ENCODE measurements at regions of chr2 and their contacts with region 1.

Region 1: DNA sequence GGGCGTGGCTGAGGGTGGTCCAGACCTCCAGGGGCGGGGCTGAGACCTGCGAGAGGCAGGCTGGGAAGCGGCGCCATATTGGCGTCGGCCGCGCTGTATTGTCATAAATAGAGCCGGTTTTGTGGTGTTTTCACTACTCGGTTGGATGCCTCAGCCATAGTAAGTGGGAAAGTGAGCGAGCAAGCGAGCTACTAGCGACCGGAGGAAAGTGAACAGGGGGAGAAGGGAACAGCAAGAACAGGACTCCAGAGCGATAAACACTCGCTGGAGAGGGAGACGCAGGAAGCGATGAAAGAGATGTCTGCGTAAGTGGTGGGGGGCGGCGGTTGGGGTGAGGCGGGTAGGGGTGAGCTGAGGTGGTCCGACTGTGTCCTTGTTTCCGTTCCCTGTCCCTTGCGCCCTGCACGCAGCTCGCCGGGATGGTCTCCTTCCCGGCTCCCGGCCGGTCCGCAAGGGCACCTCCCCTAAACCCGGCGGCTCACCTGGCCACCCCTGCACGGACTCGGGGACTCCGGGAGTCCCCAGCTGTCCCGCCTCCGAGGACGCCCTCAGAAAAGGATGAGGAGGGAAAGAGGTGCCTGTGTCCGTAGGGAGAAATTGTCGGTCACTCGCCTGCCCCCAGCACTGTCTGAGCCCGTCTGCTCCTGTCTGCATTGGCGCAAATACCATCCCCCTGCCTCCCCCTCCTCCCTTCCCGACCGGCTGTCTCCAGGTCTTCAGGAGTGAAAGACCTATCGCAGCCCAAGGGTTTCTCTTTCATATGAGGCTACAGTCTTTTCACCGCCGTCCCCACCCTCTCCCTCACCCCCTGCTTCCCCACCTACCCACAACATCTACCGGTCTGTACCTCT is at the start of gene PAPOLG:
- DNase-seq: peak; percentile 97
- ATAC-seq: peak; percentile 98
- H3K4me3 Mint-ChIP-seq: peak within 1 kb of the TSS; percentile 100
- H3K27ac Mint-ChIP-seq: peak within 1 kb of the TSS; percentile 99
- H3K4me1 Mint-ChIP-seq: peaks cover 21% of the 10 kb centered on the region
- H3K27me3 Mint-ChIP-seq: no peaks in the 10 kb centered on the region
- total RNA-seq, gene PAPOLG: 25.9 to 26.2 TPM

Region 2: GRCh38 chr2:60735496-60736250 is 20.7 kb before region 1 on chr2:
- POLR2A ChIA-PET with region 1: interaction called, 13 read pairs
- DNase-seq: peak; percentile 71
- ATAC-seq: peak; percentile 88
- H3K4me3 Mint-ChIP-seq: peak overlapping the region; percentile 98
- H3K27ac Mint-ChIP-seq: peak overlapping the region; percentile 46
- H3K4me1 Mint-ChIP-seq: peaks cover 8% of the 10 kb centered on the region
- H3K27me3 Mint-ChIP-seq: peaks cover 46% of the 10 kb centered on the region

Region 3: DNA sequence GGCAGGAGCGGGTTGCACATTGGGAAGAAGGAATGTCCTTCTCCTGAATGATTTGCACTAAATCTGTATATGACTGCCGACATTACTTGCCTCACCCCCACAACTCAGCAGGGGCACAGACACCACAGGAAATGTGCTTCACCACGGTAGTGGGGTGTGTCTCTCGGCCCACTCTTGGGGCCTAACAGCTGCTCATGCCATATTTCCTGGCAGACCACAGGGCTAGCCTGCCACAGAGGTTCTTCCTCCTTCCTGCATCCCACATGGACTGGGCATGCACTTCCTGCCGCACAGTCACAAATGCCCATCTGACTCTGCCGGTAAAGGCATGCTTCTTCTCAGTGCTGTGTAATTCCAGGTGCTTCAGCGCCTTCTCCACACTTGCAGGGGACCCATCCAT is 10.7 kb before region 1 on chr2:
- POLR2A ChIA-PET with region 1: interaction called, 11 read pairs
- DNase-seq: peak; percentile 46
- ATAC-seq: peak; percentile 86
- H3K4me3 Mint-ChIP-seq: peak overlapping the region; percentile 60
- H3K27ac Mint-ChIP-seq: peak overlapping the region; percentile 77
- H3K4me1 Mint-ChIP-seq: peaks cover 18% of the 10 kb centered on the region
- H3K27me3 Mint-ChIP-seq: peaks cover 14% of the 10 kb centered on the region

Region 4: GRCh38 chr2:60998628-60999545 is 242.5 kb after region 1 on chr2:
- POLR2A ChIA-PET with region 1: no interaction called
- DNase-seq: no peak
- ATAC-seq: peak; percentile 61
- H3K4me3 Mint-ChIP-seq: no peak overlapping the region
- H3K27ac Mint-ChIP-seq: no peak overlapping the region
- H3K4me1 Mint-ChIP-seq: no peaks in the 10 kb centered on the region
- H3K27me3 Mint-ChIP-seq: no peaks in the 10 kb centered on the region

Measured in activated naive CD8-positive, alpha-beta T cell treated with anti-CD3 and anti-CD28 coated beads, Interleukin-2, amount 10 ng/mL, durations not matched to agents 7 days and 5 days (primary cell).